MCF 10A (cell line): ENCODE measurements at regions of chr1 and their contacts with region 1.

Region 1: DNA sequence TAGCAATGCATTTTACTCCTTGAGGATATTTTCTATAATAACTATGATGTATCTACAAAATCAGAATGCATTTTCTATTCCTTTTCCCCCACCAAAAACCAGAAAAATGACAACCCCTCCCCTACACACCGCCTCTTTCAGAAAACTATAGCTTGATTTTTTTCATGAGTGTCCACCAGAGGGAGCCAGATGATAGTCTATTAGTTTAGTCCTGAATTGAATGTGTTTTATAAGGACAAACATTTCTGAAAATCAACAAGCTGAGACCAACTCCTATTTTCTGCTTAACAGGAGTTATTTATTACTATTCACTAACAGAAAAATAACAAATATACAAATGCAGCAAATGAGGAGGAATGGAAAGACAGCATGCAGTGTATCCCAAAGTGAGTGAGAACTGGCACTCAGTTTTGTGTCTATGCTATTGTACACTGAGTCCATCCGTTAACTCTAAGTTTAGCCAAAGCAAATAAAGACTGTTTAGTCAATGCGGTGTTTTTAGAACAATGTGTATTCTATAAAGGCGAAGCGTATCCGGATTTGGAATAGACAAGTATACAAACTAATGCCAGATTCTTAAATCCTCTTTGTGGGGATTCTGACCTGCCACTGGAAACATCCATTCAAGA is 182.6 kb downstream of the VAV3 start:
- DNase-seq: peak; percentile 68
- H3K4me3 Mint-ChIP-seq: no peak overlapping the region
- H3K27ac Mint-ChIP-seq: no peak overlapping the region
- H3K4me1 Mint-ChIP-seq: no peaks in the 10 kb centered on the region
- H3K27me3 Mint-ChIP-seq: no peaks in the 10 kb centered on the region
- CTCF ChIP-seq: peak; percentile 60

Region 2: GRCh38 chr1:107795441-107795840 is 13.1 kb after region 1 on chr1:
- CTCF ChIA-PET with region 1: interaction called, 19 read pairs
- POLR2A ChIA-PET with region 1: no interaction called
- intact Hi-C with region 1: no loop called
- DNase-seq: no peak
- H3K4me3 Mint-ChIP-seq: no peak overlapping the region
- H3K27ac Mint-ChIP-seq: no peak overlapping the region
- H3K4me1 Mint-ChIP-seq: no peaks in the 10 kb centered on the region
- H3K27me3 Mint-ChIP-seq: no peaks in the 10 kb centered on the region
- CTCF ChIP-seq: no peak

Region 3: GRCh38 chr1:107877092-107877491 is 94.8 kb after region 1 on chr1:
- CTCF ChIA-PET with region 1: interaction called, 4 read pairs
- POLR2A ChIA-PET with region 1: no interaction called
- intact Hi-C with region 1: loop called (anchors 10 kb)
- DNase-seq: peak; percentile 82
- H3K4me3 Mint-ChIP-seq: no peak overlapping the region
- H3K27ac Mint-ChIP-seq: no peak overlapping the region
- H3K4me1 Mint-ChIP-seq: peaks cover 33% of the 10 kb centered on the region
- H3K27me3 Mint-ChIP-seq: no peaks in the 10 kb centered on the region
- CTCF ChIP-seq: no peak

Region 4: GRCh38 chr1:107889524-107889923 is 107.2 kb after region 1 on chr1:
- CTCF ChIA-PET with region 1: no interaction called
- POLR2A ChIA-PET with region 1: no interaction called
- intact Hi-C with region 1: no loop called
- DNase-seq: no peak
- H3K4me3 Mint-ChIP-seq: no peak overlapping the region
- H3K27ac Mint-ChIP-seq: no peak overlapping the region
- H3K4me1 Mint-ChIP-seq: no peaks in the 10 kb centered on the region
- H3K27me3 Mint-ChIP-seq: no peaks in the 10 kb centered on the region
- CTCF ChIP-seq: no peak

Region 5: GRCh38 chr1:107936498-107937481 is 154.5 kb after region 1 on chr1:
- CTCF ChIA-PET with region 1: no interaction called
- POLR2A ChIA-PET with region 1: no interaction called
- intact Hi-C with region 1: loop called (anchors 10 kb)
- DNase-seq: peak; percentile 97
- H3K4me3 Mint-ChIP-seq: no peak overlapping the region
- H3K27ac Mint-ChIP-seq: peak overlapping the region; percentile 52
- H3K4me1 Mint-ChIP-seq: peaks cover 28% of the 10 kb centered on the region
- H3K27me3 Mint-ChIP-seq: no peaks in the 10 kb centered on the region
- CTCF ChIP-seq: no peak

Region 6: GRCh38 chr1:107976836-107977235 is 194.5 kb after region 1 on chr1:
- CTCF ChIA-PET with region 1: no interaction called
- POLR2A ChIA-PET with region 1: no interaction called
- intact Hi-C with region 1: no loop called
- DNase-seq: no peak
- H3K4me3 Mint-ChIP-seq: no peak overlapping the region
- H3K27ac Mint-ChIP-seq: no peak overlapping the region
- H3K4me1 Mint-ChIP-seq: no peaks in the 10 kb centered on the region
- H3K27me3 Mint-ChIP-seq: no peaks in the 10 kb centered on the region
- CTCF ChIP-seq: no peak

Region 7: DNA sequence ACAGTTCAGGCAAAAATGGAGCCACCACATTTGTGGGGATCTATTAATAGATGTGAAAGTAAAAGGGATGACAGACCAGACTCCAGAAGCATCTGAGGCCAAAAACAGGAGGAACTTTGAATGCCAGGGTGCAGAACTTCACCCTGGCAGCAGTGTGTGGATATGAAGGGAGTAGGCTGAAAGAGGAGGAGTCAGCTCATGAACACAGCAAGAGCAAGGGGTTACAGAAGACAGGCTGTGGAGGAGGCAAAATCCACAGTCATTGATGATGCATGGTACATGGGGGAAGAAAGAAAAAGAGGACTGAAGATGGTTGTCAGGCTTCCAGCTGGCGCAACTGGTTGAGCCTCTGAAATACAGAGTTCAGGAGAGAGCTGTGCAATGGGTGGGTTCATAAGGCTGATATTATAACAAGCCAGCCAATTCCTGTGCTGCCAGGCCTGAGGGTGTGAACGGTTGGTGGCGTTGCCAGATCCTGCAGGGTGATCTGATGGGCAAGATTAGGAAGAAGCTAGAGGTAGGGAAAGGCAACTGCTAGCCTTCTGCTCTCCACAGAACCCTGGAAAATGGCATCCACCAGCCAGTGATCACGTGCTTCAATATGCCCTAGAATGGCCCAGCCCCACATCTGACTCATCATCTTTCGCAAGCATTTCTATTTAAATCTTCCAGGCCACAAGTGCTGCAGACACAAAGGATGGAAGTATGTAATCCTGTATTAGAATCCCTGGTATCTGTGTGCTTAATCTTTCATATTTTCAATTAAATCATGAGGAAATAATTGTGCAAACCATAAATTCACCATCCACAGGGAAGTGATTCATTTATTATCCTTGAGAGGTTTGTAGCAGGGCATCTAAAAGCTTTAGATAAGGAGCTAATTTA is 335.9 kb after region 1 on chr1:
- CTCF ChIA-PET with region 1: interaction called, 382 read pairs
- POLR2A ChIA-PET with region 1: interaction called, 31 read pairs
- intact Hi-C with region 1: no loop called
- DNase-seq: peak; percentile 21
- H3K4me3 Mint-ChIP-seq: no peak overlapping the region
- H3K27ac Mint-ChIP-seq: no peak overlapping the region
- H3K4me1 Mint-ChIP-seq: no peaks in the 10 kb centered on the region
- H3K27me3 Mint-ChIP-seq: peaks cover 24% of the 10 kb centered on the region
- CTCF ChIP-seq: no peak

Region 8: GRCh38 chr1:108199781-108200570 is 417.6 kb after region 1 on chr1 and contains the start of gene SLC25A24:
- CTCF ChIA-PET with region 1: interaction called, 3 read pairs
- POLR2A ChIA-PET with region 1: interaction called, 9 read pairs
- intact Hi-C with region 1: loop called (anchors 10 kb)
- DNase-seq: peak; percentile 81
- H3K4me3 Mint-ChIP-seq: peak within 1 kb of the TSS; percentile 92
- H3K27ac Mint-ChIP-seq: peak within 1 kb of the TSS; percentile 91
- H3K4me1 Mint-ChIP-seq: peaks cover 27% of the 10 kb centered on the region
- H3K27me3 Mint-ChIP-seq: no peaks in the 10 kb centered on the region
- CTCF ChIP-seq: no peak
- total RNA-seq, gene SLC25A24: 21.0 and 28.3 TPM in 2 replicates